ENCODE measurements at regions of chr9 and their contacts with region 1.

Region 1: GRCh38 chr9:136849038-136849959 is at the start of gene PHPT1:
- DNase-seq: peak; percentile 98
- ATAC-seq: peak; percentile 91
- H3K4me3 Mint-ChIP-seq: peak within 1 kb of the TSS; percentile 93
- H3K27ac Mint-ChIP-seq: peak within 1 kb of the TSS; percentile 88
- H3K4me1 Mint-ChIP-seq: peaks cover 8% of the 10 kb centered on the region
- H3K27me3 Mint-ChIP-seq: peaks cover 12% of the 10 kb centered on the region
- total RNA-seq, gene PHPT1: 94.5 to 98.9 TPM

Region 2: DNA sequence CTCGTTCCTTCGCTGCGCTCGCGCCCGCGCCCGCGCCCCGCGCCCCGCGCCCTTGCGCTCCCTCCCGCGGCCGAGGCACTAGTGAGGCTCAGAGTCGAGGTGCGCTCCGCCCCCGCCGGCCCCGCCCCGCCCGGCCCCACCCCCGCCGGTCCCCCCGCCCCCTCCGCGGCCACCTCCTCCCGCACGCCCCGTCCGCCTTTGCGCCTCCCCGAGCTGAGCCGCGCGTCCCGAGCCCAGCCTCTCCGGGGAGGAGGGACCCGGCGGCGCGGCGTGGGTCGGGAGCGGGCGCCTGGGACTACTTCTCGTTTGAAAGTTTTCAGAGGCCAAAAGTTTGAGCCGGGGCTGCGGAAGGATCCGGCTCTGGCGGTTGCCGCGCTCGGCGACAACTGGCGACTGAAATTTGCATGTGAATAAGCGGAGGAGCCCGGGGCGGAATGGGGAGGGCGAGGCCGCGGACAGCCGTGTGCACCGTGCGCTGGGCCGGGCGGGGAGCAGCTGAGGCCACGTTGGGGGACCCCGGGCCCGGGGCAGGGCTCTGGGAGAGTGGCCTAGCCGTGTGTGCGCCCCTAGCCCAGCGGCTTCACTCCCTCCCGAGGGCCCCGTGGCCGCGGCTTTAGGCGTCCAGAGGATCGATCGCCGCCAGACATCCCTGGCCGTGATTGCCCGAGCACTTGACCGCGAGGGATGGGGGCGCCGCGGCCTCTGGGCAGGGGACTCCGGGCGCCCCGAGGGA is 303.2 kb before region 1 on chr9 and contains the start of gene NOTCH1:
- CTCF ChIA-PET with region 1: no interaction called
- POLR2A ChIA-PET with region 1: no interaction called
- intact Hi-C with region 1: loop called in 1 of 2 experiments (anchors 2 kb)
- DNase-seq: peak; percentile 95
- ATAC-seq: peak; percentile 75
- H3K4me3 Mint-ChIP-seq: peak within 1 kb of the TSS; percentile 92
- H3K27ac Mint-ChIP-seq: peak within 1 kb of the TSS; percentile 88
- H3K4me1 Mint-ChIP-seq: peaks cover 34% of the 10 kb centered on the region
- H3K27me3 Mint-ChIP-seq: no peaks in the 10 kb centered on the region
- total RNA-seq, gene NOTCH1: 70.0 to 79.4 TPM

Region 3: GRCh38 chr9:136807281-136808074 is 41.8 kb before region 1 on chr9 and contains the start of gene RABL6:
- CTCF ChIA-PET with region 1: interaction called, 21 read pairs
- POLR2A ChIA-PET with region 1: no interaction called
- intact Hi-C with region 1: no loop called
- DNase-seq: peak; percentile 86
- ATAC-seq: peak; percentile 88
- H3K4me3 Mint-ChIP-seq: peak within 1 kb of the TSS; percentile 81
- H3K27ac Mint-ChIP-seq: peak within 1 kb of the TSS; percentile 88
- H3K4me1 Mint-ChIP-seq: peaks cover 33% of the 10 kb centered on the region
- H3K27me3 Mint-ChIP-seq: no peaks in the 10 kb centered on the region
- total RNA-seq, gene RABL6: 66.2 to 71.8 TPM

Region 4: DNA sequence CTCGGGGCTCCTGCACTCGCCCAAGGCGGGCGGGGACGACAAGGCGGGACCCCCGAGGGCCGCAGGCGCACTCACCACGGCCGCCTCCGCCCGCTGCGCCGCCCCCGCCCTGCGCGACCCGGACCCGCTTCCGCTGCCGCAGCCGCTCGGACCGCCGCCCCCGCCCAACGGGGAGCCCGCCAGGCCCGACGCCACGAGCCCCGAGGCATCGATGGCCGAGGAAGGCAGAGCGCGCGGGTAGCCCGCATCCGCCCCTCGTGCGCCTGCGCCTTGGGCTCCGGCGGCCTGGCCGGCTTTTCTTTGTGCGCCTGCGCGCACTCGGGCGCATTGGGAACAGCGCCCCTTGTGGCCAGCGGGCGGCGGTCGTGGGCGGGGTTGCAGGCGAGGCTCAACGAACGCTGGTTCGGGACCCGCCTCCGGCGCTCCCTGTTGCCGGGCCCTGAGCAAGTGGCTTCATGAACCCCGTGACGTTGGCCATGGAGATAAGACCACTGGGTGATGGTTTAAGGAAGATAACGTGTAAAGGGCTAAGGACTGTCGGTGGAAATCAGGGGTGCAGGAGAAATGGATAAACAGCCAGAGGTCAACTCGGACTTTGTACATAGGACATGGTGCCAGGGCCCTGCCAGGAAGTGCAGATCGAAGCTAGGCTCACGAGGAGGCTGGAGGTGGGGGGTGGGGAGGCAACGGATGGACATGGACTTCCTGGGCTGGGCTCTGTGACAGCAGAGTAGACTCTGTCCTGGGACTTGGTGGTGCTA is 95.4 kb after region 1 on chr9 and contains the starts of genes C8G and FBXW5:
- CTCF ChIA-PET with region 1: interaction called, 3 read pairs
- POLR2A ChIA-PET with region 1: no interaction called
- intact Hi-C with region 1: loop called (anchors 1 to 5 kb)
- DNase-seq: peak; percentile 97
- ATAC-seq: peak; percentile 84
- H3K4me3 Mint-ChIP-seq: peak within 1 kb of the TSS; percentile 77
- H3K27ac Mint-ChIP-seq: peak within 1 kb of the TSS; percentile 88
- H3K4me1 Mint-ChIP-seq: peaks cover 9% of the 10 kb centered on the region
- H3K27me3 Mint-ChIP-seq: no peaks in the 10 kb centered on the region
- total RNA-seq, gene C8G: 0.77 TPM in 1 of 2 experiments, not detected in the other
- total RNA-seq, gene FBXW5: 54.4 to 66.4 TPM

Region 5: GRCh38 chr9:136991993-136992818 is 142.9 kb after region 1 on chr9 and contains the start of gene PAXX:
- CTCF ChIA-PET with region 1: no interaction called
- POLR2A ChIA-PET with region 1: no interaction called
- intact Hi-C with region 1: loop called in 1 of 2 experiments (anchors 1 kb)
- DNase-seq: peak; percentile 98
- ATAC-seq: peak; percentile 95
- H3K4me3 Mint-ChIP-seq: peak within 1 kb of the TSS; percentile 81
- H3K27ac Mint-ChIP-seq: peak within 1 kb of the TSS; percentile 70
- H3K4me1 Mint-ChIP-seq: peaks cover 22% of the 10 kb centered on the region
- H3K27me3 Mint-ChIP-seq: peaks cover 4% of the 10 kb centered on the region
- total RNA-seq, gene PAXX: 52.7 to 67.1 TPM

Region 6: GRCh38 chr9:137046098-137046787 is 196.9 kb after region 1 on chr9 and contains the start of gene NPDC1:
- CTCF ChIA-PET with region 1: no interaction called
- POLR2A ChIA-PET with region 1: no interaction called
- intact Hi-C with region 1: loop called in 1 of 2 experiments (anchors 5 kb)
- DNase-seq: peak; percentile 92
- ATAC-seq: peak; percentile 65
- H3K4me3 Mint-ChIP-seq: peak within 1 kb of the TSS; percentile 61
- H3K27ac Mint-ChIP-seq: no peak within 1 kb of the TSS
- H3K4me1 Mint-ChIP-seq: peaks cover 12% of the 10 kb centered on the region
- H3K27me3 Mint-ChIP-seq: peaks cover 34% of the 10 kb centered on the region
- total RNA-seq, gene NPDC1: 21.0 to 23.1 TPM

Region 7: DNA sequence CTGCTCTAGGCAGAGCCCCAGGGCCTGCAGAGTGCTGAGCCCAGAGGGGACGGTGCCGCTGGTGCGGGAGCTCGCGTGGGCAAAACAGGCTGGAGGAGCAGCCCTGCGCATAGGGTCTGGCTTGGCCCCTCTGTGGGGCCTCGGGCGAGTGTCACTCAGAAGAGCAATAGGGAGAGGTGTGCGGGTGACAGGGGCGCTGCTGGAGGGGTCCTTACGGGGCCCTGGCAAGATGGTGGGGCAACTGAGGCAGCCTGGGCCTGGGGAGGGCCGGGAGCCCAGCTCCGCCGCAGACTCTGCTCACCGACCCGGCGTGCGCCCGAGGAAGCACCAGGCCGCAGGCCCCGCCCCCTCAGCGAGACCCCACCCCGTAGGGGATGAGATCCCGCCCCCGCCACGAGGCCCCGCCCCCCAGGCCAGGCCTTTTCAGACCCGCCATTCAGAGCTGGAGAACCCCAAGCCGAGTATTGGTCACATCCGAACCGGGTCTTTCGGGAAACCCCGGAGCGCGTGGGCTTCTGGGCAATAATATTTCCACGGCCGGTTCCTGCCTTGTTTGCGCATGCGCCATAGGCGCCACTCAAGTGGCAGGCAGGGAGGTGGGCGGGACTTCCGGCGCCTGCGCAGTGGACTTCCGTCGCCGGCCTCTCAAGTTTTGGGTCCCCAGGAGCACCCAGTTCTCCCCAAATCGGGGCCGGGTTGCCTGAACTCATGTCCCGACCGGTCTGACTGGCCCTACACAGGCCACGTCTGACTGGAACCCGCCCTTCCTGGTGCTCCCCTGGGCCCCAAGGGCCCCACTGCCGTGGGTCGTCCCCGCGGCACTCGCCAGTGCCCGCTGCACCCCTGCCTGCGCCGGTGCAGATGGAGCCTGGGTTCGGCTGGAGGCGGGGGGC is 374.0 kb after region 1 on chr9:
- CTCF ChIA-PET with region 1: no interaction called
- POLR2A ChIA-PET with region 1: no interaction called
- intact Hi-C with region 1: loop called in 1 of 2 experiments (anchors 1 kb)
- DNase-seq: peak; percentile 99
- ATAC-seq: peak; percentile 90
- H3K4me3 Mint-ChIP-seq: peak overlapping the region; percentile 80
- H3K27ac Mint-ChIP-seq: peak overlapping the region; percentile 83
- H3K4me1 Mint-ChIP-seq: peaks cover 8% of the 10 kb centered on the region
- H3K27me3 Mint-ChIP-seq: peaks cover 2% of the 10 kb centered on the region

Measured in activated CD4-positive, alpha-beta T cell treated with anti-CD3 and anti-CD28 coated beads for 36 hours (primary cell).